HEK293 (cell line): ENCODE measurements at regions of chr7 and their contacts with region 1.

Region 1: GRCh38 chr7:71733107-71733870 is 601.3 kb downstream of the GALNT17 start:
- H3K4me3 ChIP-seq: no peak overlapping the region
- H3K27ac ChIP-seq: no peak overlapping the region
- H3K4me1 ChIP-seq: no peaks in the 10 kb centered on the region
- CTCF ChIP-seq: peak; percentile 34; the same call in 1 of the 2 replicates

Region 2: DNA sequence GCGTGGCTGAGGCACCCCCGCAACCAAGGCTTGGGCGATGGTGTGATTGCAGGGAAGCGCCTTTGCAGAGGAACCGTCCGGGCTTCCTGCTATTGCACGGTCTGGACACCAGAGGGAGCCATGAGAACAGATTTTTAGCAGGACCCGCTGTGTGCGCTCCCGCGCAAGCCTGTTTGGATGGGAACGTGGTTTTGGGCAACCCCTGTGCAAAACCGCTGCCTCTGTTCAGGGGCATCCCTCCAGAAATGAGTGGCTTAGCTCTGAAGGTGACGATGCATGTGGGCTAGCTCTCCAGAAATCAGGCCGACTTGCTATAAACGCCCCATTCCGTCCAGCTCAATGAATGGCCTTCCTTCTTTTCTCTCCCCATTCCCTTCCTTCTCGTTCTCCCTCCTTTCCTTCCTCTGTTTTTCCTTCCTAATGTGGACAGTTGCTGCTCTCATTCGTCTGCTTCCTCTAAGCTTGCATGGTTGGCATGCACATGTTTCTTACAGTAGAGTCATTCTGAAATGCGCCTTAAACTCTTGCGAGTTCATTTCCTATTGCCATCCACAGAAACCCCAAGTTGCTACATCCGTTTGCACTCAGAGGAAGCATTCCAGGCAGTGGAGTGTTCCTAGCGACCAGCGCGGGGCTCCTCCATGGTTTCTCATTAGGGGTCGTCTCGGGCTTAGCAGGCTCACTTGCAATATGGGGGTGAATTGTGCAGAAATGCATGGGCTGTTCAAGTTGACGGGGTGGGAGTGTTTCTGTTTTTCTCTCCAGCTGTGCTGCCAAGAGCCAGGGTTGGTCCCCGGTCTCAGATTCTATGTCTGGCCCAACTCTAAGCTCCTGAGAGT is 903.8 kb before region 1 on chr7:
- CTCF ChIA-PET with region 1: interaction called, 16 read pairs
- POLR2A ChIA-PET with region 1: no interaction called
- H3K4me3 ChIP-seq: no peak overlapping the region
- H3K27ac ChIP-seq: no peak overlapping the region
- H3K4me1 ChIP-seq: no peaks in the 10 kb centered on the region
- CTCF ChIP-seq: no peak